ENCODE measurements at regions of chr2 and their contacts with region 1.

Region 1: DNA sequence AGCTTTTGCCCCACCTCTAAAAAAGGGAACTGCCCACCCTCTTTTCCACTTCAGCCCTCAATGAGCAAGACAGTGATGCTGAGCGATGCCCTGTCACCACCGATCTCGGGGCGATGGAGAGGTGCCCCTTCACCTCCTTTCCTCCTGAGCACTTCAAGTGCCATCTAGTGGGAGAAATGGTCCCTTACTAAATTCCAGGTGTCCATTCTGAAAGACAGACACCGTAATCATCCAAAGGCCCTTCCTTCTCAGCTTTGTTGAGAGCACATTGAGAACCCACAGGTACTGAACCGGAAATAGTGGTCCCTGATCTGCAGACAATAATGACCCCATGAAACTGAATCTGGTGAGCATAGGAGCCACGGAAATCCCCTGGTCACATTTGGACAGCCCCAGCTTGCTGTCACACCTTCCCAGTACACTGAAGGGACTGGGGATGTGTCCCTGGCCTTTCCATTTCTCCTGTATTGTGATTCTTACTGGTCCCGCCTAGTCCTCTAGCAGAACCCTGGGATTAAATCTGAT is 38.5 kb downstream of the KCTD18 start:
- DNase-seq: no peak
- H3K4me3 Mint-ChIP-seq: no peak overlapping the region
- H3K27ac Mint-ChIP-seq: peak overlapping the region; percentile 75
- H3K4me1 Mint-ChIP-seq: peaks cover 32% of the 10 kb centered on the region
- H3K27me3 Mint-ChIP-seq: no peaks in the 10 kb centered on the region

Region 2: DNA sequence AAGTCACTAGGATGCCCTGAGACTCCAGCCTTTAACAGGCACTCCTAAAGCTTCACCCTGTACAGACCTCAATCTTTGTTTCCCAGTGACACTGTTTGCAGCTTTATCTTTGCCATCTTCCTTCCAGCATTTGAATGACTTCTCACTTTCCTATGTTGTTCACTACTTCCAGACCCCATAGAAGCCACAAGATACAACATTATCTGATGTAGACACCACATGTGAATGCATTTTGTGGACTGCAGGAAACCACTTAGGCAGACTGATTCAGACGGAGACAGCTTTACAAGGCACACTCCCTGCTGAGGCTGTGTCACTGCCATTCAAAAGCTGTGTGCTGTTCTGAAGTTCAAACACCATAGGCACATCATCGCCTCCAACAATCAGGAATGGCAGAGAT is 232.2 kb before region 1 on chr2:
- intact Hi-C with region 1: loop called (anchors 5 kb)
- DNase-seq: no peak
- H3K4me3 Mint-ChIP-seq: no peak overlapping the region
- H3K27ac Mint-ChIP-seq: no peak overlapping the region
- H3K4me1 Mint-ChIP-seq: peaks cover 5% of the 10 kb centered on the region
- H3K27me3 Mint-ChIP-seq: peaks cover 67% of the 10 kb centered on the region

Region 3: GRCh38 chr2:200306196-200306930 is 165.0 kb before region 1 on chr2 and contains the start of gene SPATS2L:
- intact Hi-C with region 1: no loop called
- DNase-seq: peak; percentile 48
- H3K4me3 Mint-ChIP-seq: peak within 1 kb of the TSS; percentile 92
- H3K27ac Mint-ChIP-seq: peak within 1 kb of the TSS; percentile 91
- H3K4me1 Mint-ChIP-seq: peaks cover 40% of the 10 kb centered on the region
- H3K27me3 Mint-ChIP-seq: peaks cover 12% of the 10 kb centered on the region
- total RNA-seq, gene SPATS2L: 57.5 and 62.2 TPM in 2 replicates

Region 4: GRCh38 chr2:200405599-200406298 is 65.6 kb before region 1 on chr2:
- intact Hi-C with region 1: loop called (anchors 1 kb)
- DNase-seq: no peak
- H3K4me3 Mint-ChIP-seq: no peak overlapping the region
- H3K27ac Mint-ChIP-seq: peak overlapping the region; percentile 67
- H3K4me1 Mint-ChIP-seq: peaks cover 50% of the 10 kb centered on the region
- H3K27me3 Mint-ChIP-seq: no peaks in the 10 kb centered on the region

Region 5: GRCh38 chr2:200778038-200778437 is 306.7 kb after region 1 on chr2:
- intact Hi-C with region 1: no loop called
- DNase-seq: no peak
- H3K4me3 Mint-ChIP-seq: no peak overlapping the region
- H3K27ac Mint-ChIP-seq: no peak overlapping the region
- H3K4me1 Mint-ChIP-seq: peaks cover 2% of the 10 kb centered on the region
- H3K27me3 Mint-ChIP-seq: peaks cover 7% of the 10 kb centered on the region

Measured in activated T-helper 2 cell treated with anti-CD3 and anti-CD28 coated beads, Interferon-gamma antibody, Interleukin-2, Interleukin-4, amounts not matched to agents 10 μg/mL and 5 μg/mL and 100 μg/mL, durations not matched to agents 14 hours and 24 hours and 36 hours (primary cell).